ENCODE measurements at regions of chr3 and their contacts with region 1.

Region 1: GRCh38 chr3:119891944-119892721 is 110.2 kb downstream of the NR1I2 start:
- DNase-seq: peak; percentile 15 to 81
- ATAC-seq: peak; percentile 67 to 81 (median 76)
- H3K4me3 ChIP-seq: no peak overlapping the region
- H3K4me3 Mint-ChIP-seq: no peak overlapping the region
- H3K27ac ChIP-seq: no peak overlapping the region
- H3K27ac Mint-ChIP-seq: peak overlapping the region in 1 of 2 donors; percentile 43
- H3K4me1 ChIP-seq: no peaks in the 10 kb centered on the region
- H3K4me1 Mint-ChIP-seq: peaks cover 9 to 10% of the 10 kb centered on the region in 2 donors
- H3K27me3 ChIP-seq: no peaks in the 10 kb centered on the region
- H3K27me3 Mint-ChIP-seq: no peaks in the 10 kb centered on the region
- CTCF ChIP-seq: peak; percentile 72

Region 2: GRCh38 chr3:119880966-119881365 is 11.2 kb before region 1 on chr3:
- intact Hi-C with region 1: no loop called
- DNase-seq: no peak
- ATAC-seq: no peak
- H3K4me3 ChIP-seq: no peak overlapping the region
- H3K4me3 Mint-ChIP-seq: no peak overlapping the region
- H3K27ac ChIP-seq: no peak overlapping the region
- H3K27ac Mint-ChIP-seq: no peak overlapping the region
- H3K4me1 ChIP-seq: no peaks in the 10 kb centered on the region
- H3K4me1 Mint-ChIP-seq: peaks cover 19% of the 10 kb centered on the region in 2 donors
- H3K27me3 ChIP-seq: no peaks in the 10 kb centered on the region
- H3K27me3 Mint-ChIP-seq: no peaks in the 10 kb centered on the region
- CTCF ChIP-seq: no peak

Region 3: GRCh38 chr3:120147072-120147871 is 255.1 kb after region 1 on chr3:
- intact Hi-C with region 1: loop called (anchors 1 kb)
- DNase-seq: peak in 1 of 2 donors; percentile 80
- ATAC-seq: peak in 2 of 3 donors; percentile 64 to 75
- H3K4me3 ChIP-seq: no peak overlapping the region
- H3K4me3 Mint-ChIP-seq: no peak overlapping the region
- H3K27ac ChIP-seq: no peak overlapping the region
- H3K27ac Mint-ChIP-seq: no peak overlapping the region
- H3K4me1 ChIP-seq: no peaks in the 10 kb centered on the region
- H3K4me1 Mint-ChIP-seq: no peaks in the 10 kb centered on the region
- H3K27me3 ChIP-seq: no peaks in the 10 kb centered on the region
- H3K27me3 Mint-ChIP-seq: no peaks in the 10 kb centered on the region
- CTCF ChIP-seq: no peak

Region 4: DNA sequence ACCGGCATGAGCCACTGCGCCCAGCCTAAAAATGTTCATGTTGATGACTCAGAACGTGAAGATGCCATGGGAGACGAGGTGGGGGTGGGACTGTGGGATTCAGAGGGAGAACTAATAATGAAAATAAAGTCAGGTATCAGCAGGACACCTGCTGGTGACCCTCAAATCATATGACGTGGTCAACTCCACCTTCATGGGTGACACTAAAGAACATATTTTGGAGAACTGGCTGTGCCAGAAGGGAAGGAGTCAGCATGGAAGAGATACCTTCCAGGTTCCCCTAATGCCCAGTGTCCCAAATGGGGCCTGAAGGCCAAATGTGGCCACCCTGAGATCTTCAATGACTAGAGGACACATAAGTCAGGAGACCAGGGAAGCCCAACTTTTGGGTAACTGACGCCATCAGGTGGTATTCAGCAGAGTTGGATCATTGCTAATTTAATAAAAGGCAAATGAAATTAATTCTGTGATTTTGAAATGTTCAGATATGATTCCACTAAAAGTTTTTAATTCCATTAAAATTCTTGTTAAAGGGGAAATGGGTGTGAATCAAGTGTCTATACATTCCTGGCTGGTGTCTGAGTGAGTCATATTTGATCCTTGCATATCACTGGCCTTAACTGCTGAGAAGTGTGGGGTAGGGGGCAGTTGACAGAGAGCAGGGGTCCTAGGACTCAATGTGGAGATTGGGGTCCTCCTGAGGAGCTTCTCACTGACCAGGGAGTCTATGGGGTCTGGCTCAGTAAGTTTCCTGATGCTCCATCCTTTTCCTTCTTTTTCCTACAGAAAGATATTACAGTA is 290.8 kb after region 1 on chr3:
- intact Hi-C with region 1: loop called (anchors 1 kb)
- DNase-seq: peak in 1 of 2 donors; percentile 29
- ATAC-seq: no peak
- H3K4me3 ChIP-seq: no peak overlapping the region
- H3K4me3 Mint-ChIP-seq: no peak overlapping the region
- H3K27ac ChIP-seq: no peak overlapping the region
- H3K27ac Mint-ChIP-seq: no peak overlapping the region
- H3K4me1 ChIP-seq: no peaks in the 10 kb centered on the region
- H3K4me1 Mint-ChIP-seq: no peaks in the 10 kb centered on the region
- H3K27me3 ChIP-seq: no peaks in the 10 kb centered on the region
- H3K27me3 Mint-ChIP-seq: peaks cover 11 to 16% of the 10 kb centered on the region in 2 donors
- CTCF ChIP-seq: peak; percentile 9

Region 5: GRCh38 chr3:120198305-120198878 is 306.3 kb after region 1 on chr3:
- intact Hi-C with region 1: loop called (anchors 1 kb)
- DNase-seq: peak in 1 of 2 donors; percentile 31
- ATAC-seq: no peak
- H3K4me3 ChIP-seq: no peak overlapping the region
- H3K4me3 Mint-ChIP-seq: no peak overlapping the region
- H3K27ac ChIP-seq: no peak overlapping the region
- H3K27ac Mint-ChIP-seq: no peak overlapping the region
- H3K4me1 ChIP-seq: no peaks in the 10 kb centered on the region
- H3K4me1 Mint-ChIP-seq: no peaks in the 10 kb centered on the region
- H3K27me3 ChIP-seq: no peaks in the 10 kb centered on the region
- H3K27me3 Mint-ChIP-seq: no peaks in the 10 kb centered on the region
- CTCF ChIP-seq: peak; percentile 8

Region 6: DNA sequence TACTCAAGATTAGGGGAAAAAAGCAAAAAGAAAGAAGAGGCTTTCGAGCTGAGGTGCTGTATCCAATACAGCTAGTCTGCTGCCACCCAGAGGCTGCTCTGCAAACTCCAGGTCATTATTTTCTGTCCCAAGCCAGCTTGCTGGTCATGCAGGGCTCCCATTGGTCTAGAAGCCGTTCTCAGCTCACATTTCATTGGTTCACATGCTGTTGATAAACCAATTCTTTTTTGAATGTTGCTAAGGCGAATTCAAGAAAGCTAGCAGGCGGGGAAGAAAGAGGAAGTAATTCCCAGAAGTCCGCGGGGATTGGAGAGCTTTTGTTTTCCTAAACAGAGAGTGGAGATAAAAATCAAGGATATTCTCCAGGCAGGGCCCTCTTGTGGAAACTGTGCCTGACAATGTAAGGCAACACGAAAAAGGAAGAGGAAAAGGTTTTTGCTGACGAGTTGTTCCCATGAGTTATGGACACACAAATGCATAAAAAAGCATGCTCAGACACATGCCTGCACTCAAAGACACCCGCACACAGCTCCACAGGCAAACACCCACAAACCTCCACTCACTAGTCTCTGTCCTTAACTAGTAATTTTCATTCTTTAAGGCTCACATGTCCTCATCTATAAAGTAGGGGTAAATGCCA is 525.3 kb after region 1 on chr3:
- intact Hi-C with region 1: loop called (anchors 5 kb)
- DNase-seq: peak; percentile 70 to 90
- ATAC-seq: peak; percentile 97 to 100 (median 100)
- H3K4me3 ChIP-seq: peak overlapping the region; percentile 33
- H3K4me3 Mint-ChIP-seq: peak overlapping the region; percentile 90
- H3K27ac ChIP-seq: no peak overlapping the region
- H3K27ac Mint-ChIP-seq: peak overlapping the region in 1 of 2 donors; percentile 75
- H3K4me1 ChIP-seq: peaks cover 8% of the 10 kb centered on the region
- H3K4me1 Mint-ChIP-seq: peaks cover 11 to 12% of the 10 kb centered on the region in 2 donors
- H3K27me3 ChIP-seq: no peaks in the 10 kb centered on the region
- H3K27me3 Mint-ChIP-seq: peaks cover 6 to 9% of the 10 kb centered on the region in 2 donors
- CTCF ChIP-seq: peak; percentile 77

Measured in natural killer cell (primary cell).